Activated B cell treated with CpG ODN at 0.5 μM for 24 hours (primary cell): ENCODE measurements at regions of chr10 and their contacts with region 1.

Region 1: GRCh38 chr10:110304780-110305421 is at the start of gene SMNDC1:
- DNase-seq: peak; percentile 93
- ATAC-seq: peak; percentile 92
- H3K4me3 Mint-ChIP-seq: peak within 1 kb of the TSS; percentile 95
- H3K27ac Mint-ChIP-seq: peak within 1 kb of the TSS; percentile 99
- H3K4me1 Mint-ChIP-seq: peaks cover 54% of the 10 kb centered on the region
- H3K27me3 Mint-ChIP-seq: no peaks in the 10 kb centered on the region
- CTCF ChIP-seq: no peak
- total RNA-seq, gene SMNDC1: 32.7 and 35.6 TPM in 2 replicates

Region 2: GRCh38 chr10:110137142-110137545 is 167.8 kb before region 1 on chr10:
- CTCF ChIA-PET with region 1: interaction called, 4 read pairs
- POLR2A ChIA-PET with region 1: interaction called, 6 read pairs
- intact Hi-C with region 1: loop called (anchors 1 kb)
- DNase-seq: no peak
- ATAC-seq: peak; percentile 66
- H3K4me3 Mint-ChIP-seq: no peak overlapping the region
- H3K27ac Mint-ChIP-seq: peak overlapping the region; percentile 68
- H3K4me1 Mint-ChIP-seq: peaks cover 35% of the 10 kb centered on the region
- H3K27me3 Mint-ChIP-seq: no peaks in the 10 kb centered on the region
- CTCF ChIP-seq: no peak

Region 3: GRCh38 chr10:110421512-110422138 is 116.7 kb after region 1 on chr10:
- CTCF ChIA-PET with region 1: no interaction called
- POLR2A ChIA-PET with region 1: no interaction called
- intact Hi-C with region 1: no loop called
- DNase-seq: no peak
- ATAC-seq: no peak
- H3K4me3 Mint-ChIP-seq: no peak overlapping the region
- H3K27ac Mint-ChIP-seq: peak overlapping the region; percentile 15
- H3K4me1 Mint-ChIP-seq: peaks cover 51% of the 10 kb centered on the region
- H3K27me3 Mint-ChIP-seq: peaks cover 11% of the 10 kb centered on the region
- CTCF ChIP-seq: no peak

Region 4: GRCh38 chr10:110434489-110435096 is 129.7 kb after region 1 on chr10:
- CTCF ChIA-PET with region 1: no interaction called
- POLR2A ChIA-PET with region 1: no interaction called
- intact Hi-C with region 1: no loop called
- DNase-seq: no peak
- ATAC-seq: no peak
- H3K4me3 Mint-ChIP-seq: no peak overlapping the region
- H3K27ac Mint-ChIP-seq: no peak overlapping the region
- H3K4me1 Mint-ChIP-seq: no peaks in the 10 kb centered on the region
- H3K27me3 Mint-ChIP-seq: peaks cover 4% of the 10 kb centered on the region
- CTCF ChIP-seq: no peak

Region 5: DNA sequence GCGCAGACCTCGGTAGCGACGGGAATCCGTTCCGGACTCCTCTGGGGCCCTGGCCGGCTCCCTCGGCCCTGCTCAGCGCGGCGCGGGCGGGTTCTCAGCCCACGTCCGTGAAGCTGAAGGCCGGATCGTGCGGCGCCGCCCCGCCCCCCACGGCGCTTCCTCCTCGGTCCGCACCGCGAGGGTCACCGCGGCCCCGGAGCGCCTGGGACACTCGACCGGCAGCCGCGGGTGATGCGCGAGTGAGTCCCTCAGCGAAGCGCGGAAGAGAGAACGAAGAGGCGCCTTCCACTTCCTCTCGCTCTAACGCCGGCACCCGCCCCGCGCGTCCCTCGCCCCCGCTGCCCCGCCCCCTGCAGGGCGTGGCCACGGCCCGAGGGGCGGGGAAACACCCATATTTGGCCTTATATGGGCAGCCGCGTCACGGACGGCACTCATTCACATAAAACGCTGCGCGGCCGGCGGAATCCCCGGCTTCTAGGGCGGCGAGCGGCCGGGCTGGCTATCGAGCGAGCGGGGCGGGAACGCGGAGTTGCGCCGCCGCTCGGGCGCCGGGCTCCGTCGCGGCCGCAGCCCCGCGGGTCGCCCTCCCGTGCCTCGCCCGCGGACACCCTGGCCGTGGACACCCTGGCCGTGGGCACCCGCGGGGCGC is 192.7 kb after region 1 on chr10 and contains the start of gene DUSP5:
- CTCF ChIA-PET with region 1: interaction called, 4 read pairs
- POLR2A ChIA-PET with region 1: interaction called, 7 read pairs
- intact Hi-C with region 1: loop called (anchors 1 kb)
- DNase-seq: peak; percentile 99
- ATAC-seq: peak; percentile 87
- H3K4me3 Mint-ChIP-seq: peak within 1 kb of the TSS; percentile 90
- H3K27ac Mint-ChIP-seq: peak within 1 kb of the TSS; percentile 77
- H3K4me1 Mint-ChIP-seq: peaks cover 66% of the 10 kb centered on the region
- H3K27me3 Mint-ChIP-seq: peaks cover 3% of the 10 kb centered on the region
- CTCF ChIP-seq: no peak
- total RNA-seq, gene DUSP5: 26.1 and 28.6 TPM in 2 replicates

Region 6: DNA sequence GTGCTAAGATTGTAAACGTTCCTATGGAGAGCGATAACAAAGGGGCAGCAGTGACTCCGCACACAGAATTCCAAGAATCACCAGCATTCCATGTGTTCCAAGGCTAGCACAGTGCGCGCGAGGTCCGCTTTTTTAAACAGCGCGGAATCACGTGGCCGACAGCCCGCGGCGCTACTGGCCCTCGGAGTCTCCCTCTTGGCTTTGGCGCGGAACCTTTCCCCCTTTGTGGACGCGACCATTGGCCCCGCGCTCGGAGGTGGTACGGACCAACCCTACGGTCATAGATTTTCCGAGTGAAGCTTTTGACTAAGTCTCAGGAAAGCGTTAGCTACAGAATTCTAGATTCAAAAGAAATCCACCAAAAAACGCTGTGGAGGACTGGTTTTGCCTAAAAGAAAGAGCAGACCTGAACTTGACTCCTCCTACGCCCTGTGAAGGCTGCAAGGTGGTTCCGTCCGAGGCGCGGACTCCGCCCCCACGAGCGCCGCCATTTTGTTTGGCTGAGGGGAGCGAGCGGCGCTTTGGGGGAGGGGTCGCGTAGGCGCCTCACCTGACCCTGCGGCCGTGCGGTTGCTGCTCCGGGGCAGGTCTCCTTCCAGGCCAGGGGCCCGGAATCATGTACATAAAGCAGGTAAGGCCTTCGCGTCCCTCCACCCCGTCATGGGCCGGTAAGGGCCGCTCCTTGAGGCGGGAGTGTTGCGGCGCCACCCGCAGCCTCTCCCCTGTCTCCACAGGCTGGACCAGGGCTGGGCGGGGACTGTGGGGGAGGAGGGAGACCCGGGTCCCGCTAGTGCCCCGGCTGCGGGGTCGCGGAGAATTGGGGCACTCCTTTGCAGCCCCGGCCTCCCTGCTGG is 262.5 kb after region 1 on chr10 and contains the start of gene SMC3:
- CTCF ChIA-PET with region 1: interaction called, 3 read pairs
- POLR2A ChIA-PET with region 1: interaction called, 7 read pairs
- intact Hi-C with region 1: loop called (anchors 1 kb)
- DNase-seq: peak; percentile 89
- ATAC-seq: peak; percentile 88
- H3K4me3 Mint-ChIP-seq: peak within 1 kb of the TSS; percentile 91
- H3K27ac Mint-ChIP-seq: peak within 1 kb of the TSS; percentile 98
- H3K4me1 Mint-ChIP-seq: peaks cover 41% of the 10 kb centered on the region
- H3K27me3 Mint-ChIP-seq: no peaks in the 10 kb centered on the region
- CTCF ChIP-seq: no peak
- total RNA-seq, gene SMC3: 41.1 and 43.3 TPM in 2 replicates

Region 7: GRCh38 chr10:110746254-110746826 is 441.4 kb after region 1 on chr10:
- CTCF ChIA-PET with region 1: no interaction called
- POLR2A ChIA-PET with region 1: no interaction called
- intact Hi-C with region 1: loop called (anchors 5 kb)
- DNase-seq: peak; percentile 39
- ATAC-seq: peak; percentile 75
- H3K4me3 Mint-ChIP-seq: no peak overlapping the region
- H3K27ac Mint-ChIP-seq: no peak overlapping the region
- H3K4me1 Mint-ChIP-seq: peaks cover 7% of the 10 kb centered on the region
- H3K27me3 Mint-ChIP-seq: peaks cover 5% of the 10 kb centered on the region
- CTCF ChIP-seq: peak; percentile 40

Region 8: DNA sequence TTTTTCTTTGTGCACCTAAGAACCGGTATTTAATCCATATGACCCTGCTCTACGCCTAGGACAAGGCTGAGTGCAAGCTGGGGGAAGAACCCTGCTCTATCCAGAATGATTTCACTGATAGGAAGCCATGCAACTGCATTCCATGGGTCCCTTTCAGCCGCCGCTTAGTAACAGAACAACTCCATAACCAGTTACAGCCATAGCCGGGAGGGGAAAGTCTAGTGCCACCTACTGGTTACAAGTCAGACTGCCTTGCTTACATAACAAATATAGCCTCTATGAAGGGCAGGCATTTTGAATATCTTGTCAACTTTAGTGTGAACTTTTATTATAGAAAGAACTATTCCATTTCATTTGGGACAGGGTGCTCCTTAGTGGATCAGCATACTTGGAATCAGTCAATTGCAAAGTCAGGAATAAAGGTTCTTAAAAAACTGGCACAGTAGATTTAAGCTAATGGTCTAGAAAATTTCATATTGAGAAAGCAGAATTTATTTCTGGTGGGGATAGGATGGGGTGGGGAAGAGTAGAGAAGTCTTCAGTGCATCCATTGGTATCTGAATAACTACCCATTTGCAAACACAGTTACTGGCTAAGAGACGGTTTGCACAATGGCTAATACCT is 1293.6 kb after region 1 on chr10:
- CTCF ChIA-PET with region 1: no interaction called
- POLR2A ChIA-PET with region 1: no interaction called
- intact Hi-C with region 1: loop called (anchors 5 kb)
- DNase-seq: no peak
- ATAC-seq: no peak
- H3K4me3 Mint-ChIP-seq: no peak overlapping the region
- H3K27ac Mint-ChIP-seq: no peak overlapping the region
- H3K4me1 Mint-ChIP-seq: no peaks in the 10 kb centered on the region
- H3K27me3 Mint-ChIP-seq: peaks cover 5% of the 10 kb centered on the region
- CTCF ChIP-seq: no peak